WTC11 (cell line): ENCODE measurements at regions of chr16 and their contacts with region 1.

Region 1: GRCh38 chr16:88785106-88785924 is at the start of gene PIEZO1:
- DNase-seq: peak; percentile 53
- ATAC-seq: peak; percentile 40
- H3K4me3 Mint-ChIP-seq: peak within 1 kb of the TSS; percentile 73
- H3K27ac Mint-ChIP-seq: no peak within 1 kb of the TSS
- H3K4me1 Mint-ChIP-seq: peaks cover 16% of the 10 kb centered on the region
- H3K27me3 Mint-ChIP-seq: 0 out of 2 replicates have a peak, but pooled peaks cover 3% of the 10 kb centered on the region
- CTCF ChIP-seq: no peak
- total RNA-seq, gene PIEZO1: 68.3 to 75.1 TPM (median 71.3 TPM) in 3 replicates

Region 2: GRCh38 chr16:88743693-88744576 is 41.4 kb before region 1 on chr16:
- CTCF ChIA-PET with region 1: interaction called, 117 read pairs
- POLR2A ChIA-PET with region 1: no interaction called
- DNase-seq: peak; percentile 94
- ATAC-seq: peak; percentile 63
- H3K4me3 Mint-ChIP-seq: no peak overlapping the region
- H3K27ac Mint-ChIP-seq: peak overlapping the region; percentile 70; the same call in 1 of the 2 replicates
- H3K4me1 Mint-ChIP-seq: peaks cover 13% of the 10 kb centered on the region
- H3K27me3 Mint-ChIP-seq: no peaks in the 10 kb centered on the region
- CTCF ChIP-seq: peak; percentile 94

Region 3: GRCh38 chr16:88770461-88771293 is 14.6 kb before region 1 on chr16:
- CTCF ChIA-PET with region 1: interaction called, 35 read pairs
- POLR2A ChIA-PET with region 1: interaction called, 3 read pairs
- DNase-seq: peak; percentile 65
- ATAC-seq: peak; percentile 64
- H3K4me3 Mint-ChIP-seq: no peak overlapping the region
- H3K27ac Mint-ChIP-seq: peak overlapping the region; percentile 57
- H3K4me1 Mint-ChIP-seq: peaks cover 29% of the 10 kb centered on the region
- H3K27me3 Mint-ChIP-seq: no peaks in the 10 kb centered on the region
- CTCF ChIP-seq: no peak

Region 4: GRCh38 chr16:88819126-88819525 is 33.8 kb after region 1 on chr16:
- CTCF ChIA-PET with region 1: no interaction called
- POLR2A ChIA-PET with region 1: no interaction called
- DNase-seq: no peak
- ATAC-seq: no peak; the same call in 1 of the 2 replicates
- H3K4me3 Mint-ChIP-seq: no peak overlapping the region
- H3K27ac Mint-ChIP-seq: peak overlapping the region; percentile 33; the same call in 1 of the 2 replicates
- H3K4me1 Mint-ChIP-seq: no peaks in the 10 kb centered on the region; the same call in 1 of the 2 replicates
- H3K27me3 Mint-ChIP-seq: no peaks in the 10 kb centered on the region
- CTCF ChIP-seq: no peak

Region 5: GRCh38 chr16:88838991-88839529 is 53.7 kb after region 1 on chr16:
- CTCF ChIA-PET with region 1: no interaction called
- POLR2A ChIA-PET with region 1: no interaction called
- DNase-seq: peak; percentile 22
- ATAC-seq: no peak
- H3K4me3 Mint-ChIP-seq: no peak overlapping the region
- H3K27ac Mint-ChIP-seq: no peak overlapping the region
- H3K4me1 Mint-ChIP-seq: no peaks in the 10 kb centered on the region
- H3K27me3 Mint-ChIP-seq: no peaks in the 10 kb centered on the region
- CTCF ChIP-seq: no peak